ENCODE measurements at regions of chr7 and their contacts with region 1.

Region 1: GRCh38 chr7:65892835-65893234 is 20.0 kb downstream of the VKORC1L1 start:
- DNase-seq: no peak
- ATAC-seq: no peak
- H3K4me3 ChIP-seq: no peak overlapping the region
- H3K27ac ChIP-seq: no peak overlapping the region
- H3K4me1 ChIP-seq: peaks cover 8% of the 10 kb centered on the region
- H3K27me3 ChIP-seq: no peaks in the 10 kb centered on the region
- CTCF ChIP-seq: no peak

Region 2: GRCh38 chr7:65974191-65974801 is 81.5 kb after region 1 on chr7:
- intact Hi-C with region 1: loop called in 1 of 2 experiments (anchors 10 kb)
- DNase-seq: no peak
- ATAC-seq: no peak
- H3K4me3 ChIP-seq: no peak overlapping the region
- H3K27ac ChIP-seq: no peak overlapping the region
- H3K4me1 ChIP-seq: no peaks in the 10 kb centered on the region
- H3K27me3 ChIP-seq: no peaks in the 10 kb centered on the region
- CTCF ChIP-seq: no peak

Measured in psoas muscle (tissue), 8 donors.